ENCODE measurements at regions of chr2 and their contacts with region 1.

Region 1: DNA sequence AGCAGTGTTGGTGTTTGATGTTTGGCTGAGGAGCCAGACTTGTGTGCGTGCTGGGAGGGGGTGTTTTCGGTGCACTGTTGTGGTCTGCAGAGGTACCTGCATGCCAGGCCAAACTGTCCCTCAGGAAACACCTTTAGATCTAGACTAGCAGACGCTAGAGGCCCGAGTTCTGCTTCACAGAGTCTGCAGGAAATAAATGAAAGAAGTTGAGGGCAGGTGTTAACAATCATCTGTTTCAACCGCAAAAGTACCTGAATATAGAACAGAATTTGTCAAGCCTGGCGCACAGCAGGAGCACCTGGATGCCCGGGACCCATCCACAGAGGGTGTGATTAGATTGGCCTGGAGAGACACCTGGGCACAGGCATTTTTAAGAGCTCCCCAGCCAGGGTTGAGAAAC is 40.5 kb upstream of the REL start:
- H3K4me3 Mint-ChIP-seq: no peak overlapping the region
- H3K27ac Mint-ChIP-seq: no peak overlapping the region
- H3K4me1 Mint-ChIP-seq: peaks cover 29% of the 10 kb centered on the region
- H3K27me3 Mint-ChIP-seq: no peaks in the 10 kb centered on the region

Region 2: DNA sequence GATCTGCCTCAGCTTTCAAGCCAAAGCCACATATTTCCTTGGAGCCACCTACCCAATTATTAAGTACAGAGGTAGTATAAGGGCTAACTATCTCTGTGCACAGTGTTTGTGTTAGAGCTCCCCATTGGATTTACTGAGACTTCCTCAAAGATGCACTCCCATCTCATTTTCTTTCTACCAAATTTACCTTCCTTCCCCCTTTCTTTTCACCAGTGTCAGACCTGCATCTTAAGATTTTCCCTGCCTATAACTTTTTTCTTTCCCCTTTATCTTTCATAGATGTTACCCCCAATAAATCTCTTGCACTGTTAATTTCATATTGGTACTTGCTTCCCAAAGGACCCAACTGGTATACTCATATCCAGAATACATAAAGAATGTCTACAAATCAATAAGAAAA is 34.6 kb after region 1 on chr2:
- intact Hi-C with region 1: loop called (anchors 5 kb)
- H3K4me3 Mint-ChIP-seq: no peak overlapping the region
- H3K27ac Mint-ChIP-seq: no peak overlapping the region
- H3K4me1 Mint-ChIP-seq: peaks cover 5% of the 10 kb centered on the region
- H3K27me3 Mint-ChIP-seq: no peaks in the 10 kb centered on the region